B cell (primary cell): ENCODE measurements at regions of chr22 and their contacts with region 1.

Region 1: GRCh38 chr22:42444077-42444904 is 12.1 kb upstream of the NFAM1 start:
- DNase-seq: peak; percentile 81
- ATAC-seq: peak; percentile 67
- H3K4me3 ChIP-seq: peak overlapping the region in 4 of 5 experiments; percentile 14 to 40 (median 30)
- H3K4me3 Mint-ChIP-seq: peak overlapping the region; percentile 77
- H3K27ac ChIP-seq: no peak overlapping the region
- H3K27ac Mint-ChIP-seq: peak overlapping the region; percentile 53
- H3K4me1 ChIP-seq: peaks cover 33 to 34% of the 10 kb centered on the region in 2 donors
- H3K4me1 Mint-ChIP-seq: peaks cover 33% of the 10 kb centered on the region
- H3K27me3 ChIP-seq: peaks cover 0 to 49% (median 10%) of the 10 kb centered on the region in 4 experiments
- H3K27me3 Mint-ChIP-seq: peaks cover 10% of the 10 kb centered on the region
- CTCF ChIP-seq: peak; percentile 73

Region 2: DNA sequence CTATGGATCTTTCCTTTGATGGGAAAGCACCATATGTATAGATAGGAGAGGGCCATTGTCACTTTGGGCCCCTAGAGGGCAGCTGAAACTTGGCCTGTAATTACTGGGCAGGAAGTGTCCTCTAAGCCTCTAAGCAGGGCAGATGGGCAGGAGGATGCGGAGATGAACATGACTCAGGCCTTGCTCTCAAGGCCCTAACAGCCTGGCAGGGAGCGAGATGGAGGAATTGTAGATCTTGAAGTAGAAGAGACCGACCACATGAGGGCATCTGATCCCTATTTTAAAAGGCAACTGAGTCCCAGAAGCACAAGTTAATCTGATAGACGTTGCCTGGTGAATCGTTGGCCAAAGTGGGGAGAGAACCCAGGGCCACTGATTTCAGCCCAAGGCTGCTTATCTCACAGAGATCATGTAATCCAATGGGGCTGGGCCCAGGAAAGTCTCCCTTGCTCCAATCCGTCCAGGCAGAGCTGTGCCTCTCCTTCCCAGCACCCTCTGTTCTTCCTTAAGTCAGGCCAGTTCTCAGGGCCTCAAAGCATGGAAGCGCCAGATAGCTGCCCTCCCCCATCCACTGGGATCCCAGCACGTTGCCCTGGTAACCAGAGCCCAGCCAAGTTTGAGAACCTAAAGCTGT is 477.6 kb before region 1 on chr22:
- CTCF ChIA-PET with region 1: interaction called, 34 read pairs
- POLR2A ChIA-PET with region 1: no interaction called
- intact Hi-C with region 1: loop called (anchors 1 kb)
- DNase-seq: peak; percentile 75
- ATAC-seq: peak; percentile 72
- H3K4me3 ChIP-seq: no peak overlapping the region
- H3K4me3 Mint-ChIP-seq: no peak overlapping the region
- H3K27ac ChIP-seq: no peak overlapping the region
- H3K27ac Mint-ChIP-seq: no peak overlapping the region
- H3K4me1 ChIP-seq: no peaks in the 10 kb centered on the region
- H3K4me1 Mint-ChIP-seq: no peaks in the 10 kb centered on the region
- H3K27me3 ChIP-seq: peaks cover 0 to 10% (median 0%) of the 10 kb centered on the region in 4 experiments
- H3K27me3 Mint-ChIP-seq: peaks cover 8% of the 10 kb centered on the region
- CTCF ChIP-seq: peak; percentile 51

Region 3: DNA sequence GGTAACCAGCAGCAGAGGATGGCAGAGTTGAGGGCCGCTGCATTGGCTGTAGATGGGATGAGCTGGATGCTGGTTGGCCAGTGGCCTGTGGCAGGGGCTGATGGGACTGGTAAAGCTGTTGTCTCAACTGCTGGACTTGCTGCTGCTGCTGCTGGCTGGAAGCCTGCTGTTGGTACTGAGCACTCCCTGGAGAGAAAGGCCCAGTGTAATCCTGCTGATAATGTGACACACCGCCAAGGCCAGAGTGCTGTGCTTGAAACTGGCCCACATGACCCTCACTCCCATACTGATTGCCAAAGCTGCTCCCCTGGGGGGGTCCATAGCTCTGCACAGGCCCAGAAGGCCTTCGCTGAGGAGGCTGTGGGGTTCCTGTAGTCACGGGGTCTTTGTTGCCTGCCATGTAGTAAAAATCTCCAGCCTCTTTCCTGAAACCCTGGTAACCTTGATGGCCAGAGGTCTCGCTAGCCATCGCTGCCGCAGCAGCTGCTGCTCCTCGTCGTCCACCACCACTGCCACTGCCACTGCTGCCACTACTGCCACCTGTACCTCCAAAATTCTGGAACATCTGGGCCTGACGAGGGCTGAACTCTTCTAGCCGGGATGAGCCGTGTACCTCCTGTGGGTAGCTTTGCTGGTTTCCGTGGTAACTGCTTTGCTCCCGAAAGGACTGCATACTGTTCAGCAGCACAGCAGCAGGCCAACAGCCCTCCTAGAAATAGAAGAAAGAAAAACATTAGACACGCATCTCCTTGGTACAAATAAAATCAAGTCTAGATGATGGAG is 229.5 kb before region 1 on chr22:
- CTCF ChIA-PET with region 1: no interaction called
- POLR2A ChIA-PET with region 1: interaction called, 11 read pairs
- intact Hi-C with region 1: no loop called
- DNase-seq: no peak
- ATAC-seq: no peak
- H3K4me3 ChIP-seq: no peak overlapping the region
- H3K4me3 Mint-ChIP-seq: no peak overlapping the region
- H3K27ac ChIP-seq: no peak overlapping the region
- H3K27ac Mint-ChIP-seq: no peak overlapping the region
- H3K4me1 ChIP-seq: peaks cover 3 to 11% of the 10 kb centered on the region in 2 donors
- H3K4me1 Mint-ChIP-seq: peaks cover 29% of the 10 kb centered on the region
- H3K27me3 ChIP-seq: no peaks in the 10 kb centered on the region
- H3K27me3 Mint-ChIP-seq: no peaks in the 10 kb centered on the region
- CTCF ChIP-seq: no peak

Region 4: DNA sequence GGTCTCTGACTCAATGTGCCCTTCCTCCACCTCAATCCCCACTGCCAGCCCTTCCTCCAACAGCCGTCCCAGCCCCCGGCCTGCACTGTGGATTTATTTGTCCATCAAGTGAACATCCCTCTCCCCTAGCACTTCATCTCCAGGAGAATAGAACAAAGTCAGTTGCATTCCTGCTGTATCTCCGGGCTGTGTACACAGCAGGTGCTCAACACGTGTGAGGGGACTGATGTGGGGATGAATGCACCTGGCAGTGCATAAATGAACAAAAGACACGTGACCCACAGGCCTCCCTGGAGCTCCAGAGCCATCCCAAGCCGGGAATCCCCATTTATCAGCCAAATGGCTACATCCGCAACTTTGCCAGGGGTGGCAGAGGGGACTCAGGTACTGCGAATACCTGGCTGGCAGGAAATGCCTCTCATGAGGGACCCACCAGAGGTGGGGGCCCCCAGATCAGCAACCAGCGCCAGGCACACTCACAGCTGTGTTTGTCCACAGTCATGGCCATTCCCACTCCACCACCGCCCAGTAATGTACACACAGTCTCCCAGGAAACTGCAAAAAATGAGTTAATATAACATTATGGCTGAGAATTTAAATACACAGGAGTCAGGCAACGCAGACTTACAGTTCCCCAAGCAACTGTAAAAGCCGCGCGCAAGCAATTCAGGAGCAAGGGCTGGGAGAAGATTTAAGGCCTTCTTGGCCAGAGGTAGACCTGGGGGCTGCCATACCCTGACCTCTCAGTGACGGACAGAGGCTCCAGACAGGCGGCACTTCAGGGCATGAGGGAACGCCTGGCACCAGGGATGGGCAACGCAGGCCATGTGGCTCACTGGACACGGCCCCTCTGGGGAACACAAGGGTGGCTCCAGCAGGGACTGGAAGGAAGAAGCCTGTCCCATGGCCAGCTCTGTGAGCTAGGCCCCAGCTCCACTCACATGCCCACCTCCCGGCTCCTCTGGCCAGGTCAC is 123.6 kb before region 1 on chr22:
- CTCF ChIA-PET with region 1: no interaction called
- POLR2A ChIA-PET with region 1: no interaction called
- intact Hi-C with region 1: no loop called
- DNase-seq: no peak
- ATAC-seq: no peak
- H3K4me3 ChIP-seq: no peak overlapping the region
- H3K4me3 Mint-ChIP-seq: no peak overlapping the region
- H3K27ac ChIP-seq: no peak overlapping the region
- H3K27ac Mint-ChIP-seq: peak overlapping the region; percentile 26
- H3K4me1 ChIP-seq: peaks cover 5 to 13% of the 10 kb centered on the region in 2 donors
- H3K4me1 Mint-ChIP-seq: peaks cover 13% of the 10 kb centered on the region
- H3K27me3 ChIP-seq: peaks cover 0 to 12% (median 1%) of the 10 kb centered on the region in 4 experiments
- H3K27me3 Mint-ChIP-seq: peaks cover 11% of the 10 kb centered on the region
- CTCF ChIP-seq: no peak

Region 5: GRCh38 chr22:42369245-42370041 is 74.8 kb before region 1 on chr22:
- CTCF ChIA-PET with region 1: interaction called, 6 read pairs
- POLR2A ChIA-PET with region 1: no interaction called
- intact Hi-C with region 1: loop called (anchors 2 kb)
- DNase-seq: peak; percentile 91
- ATAC-seq: peak; percentile 98
- H3K4me3 ChIP-seq: peak overlapping the region; percentile 58 to 90 (median 72)
- H3K4me3 Mint-ChIP-seq: peak overlapping the region; percentile 89
- H3K27ac ChIP-seq: no peak overlapping the region
- H3K27ac Mint-ChIP-seq: peak overlapping the region; percentile 72
- H3K4me1 ChIP-seq: peaks cover 17 to 28% of the 10 kb centered on the region in 2 donors
- H3K4me1 Mint-ChIP-seq: peaks cover 22% of the 10 kb centered on the region
- H3K27me3 ChIP-seq: peaks cover 0 to 52% (median 26%) of the 10 kb centered on the region in 4 experiments
- H3K27me3 Mint-ChIP-seq: peaks cover 38% of the 10 kb centered on the region
- CTCF ChIP-seq: no peak

Region 6: DNA sequence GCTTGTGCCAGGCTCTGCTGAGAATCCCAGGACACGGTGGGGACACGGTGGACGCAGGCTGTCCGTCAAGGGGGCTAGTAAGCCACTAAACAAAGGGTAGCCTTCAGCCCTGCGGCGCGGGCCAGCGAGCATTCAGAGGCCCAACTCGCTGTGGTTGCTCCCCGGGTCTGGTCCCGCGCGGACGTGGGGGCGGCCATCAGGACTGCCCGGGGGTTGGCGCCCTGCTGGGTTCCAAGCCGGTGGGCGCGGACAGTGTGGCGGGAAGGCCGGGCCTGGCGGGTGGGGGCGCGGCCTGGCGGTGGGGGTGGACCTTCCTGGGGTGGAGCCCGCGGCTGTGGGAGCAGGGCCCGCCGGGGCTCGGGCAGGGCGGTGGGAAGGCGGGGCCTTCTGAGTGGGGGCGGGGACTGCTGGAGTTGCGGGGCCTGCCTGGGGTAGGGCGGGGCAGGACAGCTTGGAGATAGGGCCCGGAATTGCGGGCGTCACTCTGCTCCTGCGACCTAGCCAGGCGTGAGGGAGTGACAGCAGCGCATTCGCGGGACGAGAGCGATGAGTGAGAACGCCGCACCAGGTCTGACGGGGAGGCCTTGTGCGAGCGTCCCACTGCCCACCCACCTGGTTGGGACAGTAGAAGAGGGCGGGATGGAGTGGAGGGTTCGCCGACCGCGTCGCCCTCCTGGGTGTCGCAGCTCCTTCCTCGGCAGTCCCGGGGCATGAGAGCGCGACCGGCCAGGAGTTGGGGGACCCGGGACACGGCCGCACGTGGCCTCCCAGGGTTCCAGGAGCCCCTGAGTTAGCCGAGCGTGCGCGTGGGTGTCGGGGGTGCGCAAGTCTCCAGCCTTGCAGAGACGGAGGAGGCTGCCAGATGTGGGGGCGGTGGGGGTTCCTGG is 109.4 kb after region 1 on chr22 and contains the start of gene SERHL2:
- CTCF ChIA-PET with region 1: interaction called, 5 read pairs
- POLR2A ChIA-PET with region 1: no interaction called
- intact Hi-C with region 1: loop called (anchors 5 kb)
- DNase-seq: peak; percentile 92
- ATAC-seq: peak; percentile 95
- H3K4me3 ChIP-seq: peak within 1 kb of the TSS in 4 of 5 experiments; percentile 65 to 73 (median 70)
- H3K4me3 Mint-ChIP-seq: peak within 1 kb of the TSS; percentile 93
- H3K27ac ChIP-seq: peak within 1 kb of the TSS; percentile 62 to 69
- H3K27ac Mint-ChIP-seq: peak within 1 kb of the TSS; percentile 75
- H3K4me1 ChIP-seq: peaks cover 39 to 50% of the 10 kb centered on the region in 2 donors
- H3K4me1 Mint-ChIP-seq: peaks cover 46% of the 10 kb centered on the region
- H3K27me3 ChIP-seq: no peaks in the 10 kb centered on the region
- H3K27me3 Mint-ChIP-seq: no peaks in the 10 kb centered on the region
- CTCF ChIP-seq: no peak
- total RNA-seq, gene SERHL2: 5.0 and 5.5 TPM in 2 replicates

Region 7: GRCh38 chr22:42564699-42565098 is 120.4 kb after region 1 on chr22:
- CTCF ChIA-PET with region 1: no interaction called
- POLR2A ChIA-PET with region 1: no interaction called
- intact Hi-C with region 1: no loop called
- DNase-seq: no peak
- ATAC-seq: no peak
- H3K4me3 ChIP-seq: no peak overlapping the region
- H3K4me3 Mint-ChIP-seq: no peak overlapping the region
- H3K27ac ChIP-seq: no peak overlapping the region
- H3K27ac Mint-ChIP-seq: no peak overlapping the region
- H3K4me1 ChIP-seq: peaks cover 13 to 19% of the 10 kb centered on the region in 2 donors
- H3K4me1 Mint-ChIP-seq: peaks cover 15% of the 10 kb centered on the region
- H3K27me3 ChIP-seq: no peaks in the 10 kb centered on the region
- H3K27me3 Mint-ChIP-seq: no peaks in the 10 kb centered on the region
- CTCF ChIP-seq: no peak

Region 8: DNA sequence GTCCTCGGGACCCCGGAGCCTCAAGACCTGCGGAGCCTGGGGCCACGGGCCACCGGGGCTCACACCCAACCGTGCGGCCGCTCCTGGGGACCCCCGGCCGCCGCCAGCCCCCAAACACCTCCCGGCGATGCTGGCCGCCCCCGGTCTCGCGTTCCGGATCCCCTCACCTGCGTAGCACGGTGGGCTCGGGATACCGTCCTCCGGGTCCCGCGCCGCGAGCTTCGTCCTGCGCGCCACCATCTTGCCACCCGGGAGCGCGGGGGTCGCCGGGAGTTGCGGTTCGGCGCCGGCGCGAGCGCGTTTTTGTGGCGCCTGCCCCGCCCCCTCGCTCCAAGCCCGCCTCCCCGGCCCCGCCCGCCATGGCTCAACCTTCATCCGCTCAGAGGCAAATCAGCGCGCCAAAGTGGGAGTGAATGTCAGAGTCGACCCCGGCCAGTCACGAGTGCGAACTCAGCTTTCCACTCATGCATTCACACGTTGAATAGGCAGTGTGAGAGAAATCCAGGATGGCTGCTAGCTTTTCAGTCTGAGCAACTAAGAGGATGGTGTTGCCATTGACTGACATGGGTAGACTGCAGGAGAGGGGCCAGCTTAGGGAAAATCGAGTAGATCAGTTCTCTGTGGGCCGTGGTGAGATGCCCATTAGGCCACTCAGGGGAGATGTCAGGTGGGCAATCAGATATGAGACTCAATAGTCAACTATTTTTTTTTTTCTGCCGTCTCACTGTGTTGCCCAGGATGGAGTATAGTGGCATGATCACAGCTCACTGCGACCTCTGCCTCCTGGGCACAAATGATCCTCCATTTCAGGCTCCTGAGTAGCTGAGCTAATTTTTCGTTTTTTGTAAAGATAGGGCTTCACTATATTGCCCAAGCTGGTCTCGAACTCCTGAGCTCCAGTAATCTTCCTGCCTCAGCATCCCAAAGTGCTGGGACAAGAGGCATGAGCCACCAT is 137.7 kb after region 1 on chr22:
- CTCF ChIA-PET with region 1: no interaction called
- POLR2A ChIA-PET with region 1: no interaction called
- intact Hi-C with region 1: no loop called
- DNase-seq: peak; percentile 87
- ATAC-seq: peak; percentile 91
- H3K4me3 ChIP-seq: peak overlapping the region in 4 of 5 experiments; percentile 58 to 78 (median 68)
- H3K4me3 Mint-ChIP-seq: peak overlapping the region; percentile 95
- H3K27ac ChIP-seq: peak overlapping the region; percentile 50 to 69
- H3K27ac Mint-ChIP-seq: peak overlapping the region; percentile 86
- H3K4me1 ChIP-seq: peaks cover 4 to 11% of the 10 kb centered on the region in 2 donors
- H3K4me1 Mint-ChIP-seq: peaks cover 12% of the 10 kb centered on the region
- H3K27me3 ChIP-seq: no peaks in the 10 kb centered on the region
- H3K27me3 Mint-ChIP-seq: no peaks in the 10 kb centered on the region
- CTCF ChIP-seq: no peak